H1 (cell line): ENCODE measurements at regions of chr6 and their contacts with region 1.

Region 1: GRCh38 chr6:143427109-143427817 is 23.2 kb downstream of the ADAT2 start:
- DNase-seq: peak; percentile 49 to 79
- H3K4me3 ChIP-seq: no peak overlapping the region
- H3K27ac ChIP-seq: no peak overlapping the region
- H3K4me1 ChIP-seq: no peaks in the 10 kb centered on the region
- H3K27me3 ChIP-seq: no peaks in the 10 kb centered on the region
- CTCF ChIP-seq: peak; percentile 90 to 100 (median 95)
- EP300 ChIP-seq: no peak
- POLR2A ChIP-seq: no peak
- RAD21 ChIP-seq: peak; percentile 98 to 99

Region 2: DNA sequence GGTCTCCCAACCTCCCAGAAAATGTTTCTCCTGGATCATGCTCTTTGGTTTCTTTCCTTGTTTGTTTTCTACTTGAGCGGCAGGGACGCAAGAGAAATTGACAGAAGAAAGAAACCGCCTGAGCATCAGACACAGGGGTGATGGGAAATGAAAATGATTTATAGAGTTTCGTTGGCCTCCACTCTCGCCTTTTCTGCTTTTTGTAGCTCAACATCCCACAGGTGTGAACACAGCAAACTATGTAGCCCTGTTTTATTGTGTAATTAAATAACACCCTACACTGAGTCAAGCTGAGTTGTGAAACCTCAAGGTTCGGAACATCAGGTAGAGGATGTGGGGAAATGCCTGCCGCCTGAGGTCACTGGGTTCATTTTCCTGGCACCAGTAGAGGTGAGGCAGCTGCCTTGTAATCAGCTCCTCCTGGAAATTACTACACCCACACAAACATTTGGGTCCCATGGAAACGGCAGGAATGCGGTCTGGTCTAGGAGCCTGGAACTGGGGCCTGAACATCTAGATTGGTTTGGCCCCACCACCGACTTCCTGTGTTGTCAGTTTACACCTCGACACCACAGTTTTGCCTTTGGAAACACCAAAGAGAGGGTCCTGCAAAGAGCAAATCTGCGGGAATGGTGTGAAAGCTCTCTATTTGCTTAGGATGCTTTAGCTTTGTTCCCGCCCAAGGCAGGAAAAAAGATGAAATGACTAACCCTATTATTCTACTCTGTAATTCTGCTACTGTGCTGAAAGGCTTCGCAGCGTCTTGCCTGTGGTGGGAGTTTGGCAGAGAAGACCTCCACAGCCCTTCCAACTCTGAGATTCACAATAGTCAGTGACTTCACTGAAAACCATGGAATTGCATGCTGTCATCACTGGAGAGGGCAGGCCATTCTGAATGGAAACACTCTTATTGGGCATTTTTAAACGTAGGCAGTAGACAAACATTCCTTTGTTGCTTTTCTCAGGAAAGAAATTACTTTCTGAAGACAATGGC is 29.7 kb before region 1 on chr6:
- CTCF ChIA-PET with region 1: interaction called, 14 read pairs
- POLR2A ChIA-PET with region 1: no interaction called
- DNase-seq: peak in 1 of 2 experiments; percentile 44
- H3K4me3 ChIP-seq: no peak overlapping the region
- H3K27ac ChIP-seq: no peak overlapping the region
- H3K4me1 ChIP-seq: peaks cover 0 to 13% (median 2%) of the 10 kb centered on the region in 4 experiments; a peak in 3 of 7 replicates
- H3K27me3 ChIP-seq: no peaks in the 10 kb centered on the region
- CTCF ChIP-seq: no peak
- EP300 ChIP-seq: no peak
- POLR2A ChIP-seq: no peak
- RAD21 ChIP-seq: 0 out of 4 replicates have a peak, but pooled peaks of 1 of the 2 experiments have one; percentile 8

Region 3: GRCh38 chr6:143414769-143415168 is 12.5 kb before region 1 on chr6:
- CTCF ChIA-PET with region 1: interaction called, 33 read pairs
- POLR2A ChIA-PET with region 1: interaction called, 3 read pairs
- DNase-seq: no peak
- H3K4me3 ChIP-seq: no peak overlapping the region
- H3K27ac ChIP-seq: no peak overlapping the region
- H3K4me1 ChIP-seq: no peaks in the 10 kb centered on the region; a peak in 1 of 7 replicates
- H3K27me3 ChIP-seq: no peaks in the 10 kb centered on the region
- CTCF ChIP-seq: no peak
- EP300 ChIP-seq: no peak
- POLR2A ChIP-seq: no peak
- RAD21 ChIP-seq: no peak

Region 4: DNA sequence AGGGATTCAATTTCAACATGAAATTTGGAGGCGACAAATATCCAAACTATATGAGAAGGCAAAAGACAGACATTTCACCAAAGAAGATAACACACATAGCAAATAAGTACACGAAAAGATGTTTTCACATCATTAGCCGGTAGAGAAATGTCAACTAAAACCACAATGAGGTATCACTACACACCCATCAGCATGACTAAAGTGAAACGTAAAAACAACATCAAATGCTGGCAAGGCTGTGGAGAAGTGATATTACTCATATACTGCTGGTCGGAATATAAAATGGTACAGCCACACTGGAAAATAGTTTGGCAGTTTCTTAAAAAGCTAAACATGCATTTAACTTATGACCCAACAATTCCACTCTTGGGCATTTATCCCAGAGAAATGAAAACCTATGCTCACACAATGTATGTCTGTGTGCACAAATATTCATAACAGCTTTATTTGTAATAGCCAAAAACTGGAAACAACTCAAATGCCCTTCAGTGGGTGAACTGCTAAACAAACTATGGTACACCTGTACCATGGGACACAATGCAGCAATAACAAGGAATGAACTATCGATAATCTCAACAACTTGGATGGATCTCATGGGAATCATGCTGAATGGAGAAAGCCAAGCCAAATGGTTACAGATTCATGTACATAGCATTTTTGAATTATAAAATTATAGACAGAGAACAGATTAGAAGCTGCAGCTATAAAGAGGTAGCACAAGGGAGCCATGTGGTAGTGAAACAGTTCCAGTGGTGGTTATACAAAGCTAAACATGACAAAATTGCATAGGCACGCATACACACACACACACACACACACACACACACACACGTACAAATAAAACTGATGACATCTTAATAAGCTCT is 14.7 kb after region 1 on chr6:
- CTCF ChIA-PET with region 1: interaction called, 11 read pairs
- POLR2A ChIA-PET with region 1: no interaction called
- DNase-seq: no peak
- H3K4me3 ChIP-seq: no peak overlapping the region
- H3K27ac ChIP-seq: no peak overlapping the region
- H3K4me1 ChIP-seq: no peaks in the 10 kb centered on the region
- H3K27me3 ChIP-seq: peaks cover 0 to 1% (median 0%) of the 10 kb centered on the region in 4 experiments; a peak in 1 of 7 replicates
- CTCF ChIP-seq: no peak
- EP300 ChIP-seq: no peak
- POLR2A ChIP-seq: no peak
- RAD21 ChIP-seq: no peak